ENCODE measurements at regions of chr5 and their contacts with region 1.

Region 1: GRCh38 chr5:174045470-174046025 is at the start of gene NSG2:
- DNase-seq: peak; percentile 72 to 91
- ATAC-seq: peak; percentile 99 to 100
- H3K4me3 ChIP-seq: no peak within 1 kb of the TSS
- H3K27ac ChIP-seq: no peak within 1 kb of the TSS
- H3K4me1 ChIP-seq: no peaks in the 10 kb centered on the region
- CTCF ChIP-seq: peak; percentile 81
- EP300 ChIP-seq: no peak
- POLR2A ChIP-seq: no peak
- RAD21 ChIP-seq: peak; percentile 92
- polyA plus RNA-seq, gene NSG2: 0.05 and 0.06 TPM in 2 replicates

Region 2: GRCh38 chr5:173887610-173888472 is 157.7 kb before region 1 on chr5 and contains the start of gene CPEB4:
- CTCF ChIA-PET with region 1: no interaction called
- POLR2A ChIA-PET with region 1: no interaction called
- DNase-seq: peak; percentile 99
- ATAC-seq: peak; percentile 97 to 98
- H3K4me3 ChIP-seq: peak within 1 kb of the TSS; percentile 83
- H3K27ac ChIP-seq: peak within 1 kb of the TSS; percentile 93 to 98
- H3K4me1 ChIP-seq: peaks cover 20% of the 10 kb centered on the region
- CTCF ChIP-seq: no peak
- EP300 ChIP-seq: no peak
- POLR2A ChIP-seq: peak; percentile 69
- RAD21 ChIP-seq: no peak; a peak in 1 of 5 replicates
- polyA plus RNA-seq, gene CPEB4: 49.1 and 50.0 TPM in 2 replicates

Region 3: GRCh38 chr5:174030289-174030688 is 15.3 kb before region 1 on chr5:
- CTCF ChIA-PET with region 1: interaction called, 17 read pairs
- POLR2A ChIA-PET with region 1: no interaction called
- DNase-seq: no peak
- ATAC-seq: no peak
- H3K4me3 ChIP-seq: no peak overlapping the region
- H3K27ac ChIP-seq: no peak overlapping the region
- H3K4me1 ChIP-seq: no peaks in the 10 kb centered on the region
- CTCF ChIP-seq: no peak
- EP300 ChIP-seq: no peak
- POLR2A ChIP-seq: no peak
- RAD21 ChIP-seq: no peak

Region 4: DNA sequence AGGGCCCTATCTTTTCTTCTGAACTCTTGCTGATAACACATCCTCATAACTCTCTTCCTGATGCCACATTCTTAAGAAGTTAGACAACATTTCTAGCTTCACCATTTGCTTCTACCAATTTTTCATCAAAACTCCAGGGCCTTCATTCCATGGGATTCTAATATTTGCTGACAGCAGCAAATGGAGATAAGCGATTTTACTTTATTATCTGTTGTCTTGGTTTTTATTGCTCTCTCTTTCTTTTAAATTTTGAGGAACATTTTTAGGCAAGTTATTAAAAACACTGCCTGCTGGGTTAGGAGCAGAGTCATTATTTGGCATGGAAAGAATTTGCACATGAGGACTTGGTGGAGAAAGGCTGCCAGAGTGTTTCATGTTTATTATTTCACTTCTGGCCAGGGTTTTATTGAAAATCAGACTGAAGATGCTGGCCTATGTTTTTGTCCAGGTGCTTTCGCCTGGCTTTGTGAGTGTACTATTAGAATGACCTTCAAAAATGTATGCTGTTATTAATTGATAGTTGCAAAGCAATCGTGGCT is 27.6 kb after region 1 on chr5:
- CTCF ChIA-PET with region 1: interaction called, 10 read pairs
- POLR2A ChIA-PET with region 1: no interaction called
- DNase-seq: no peak
- ATAC-seq: no peak
- H3K4me3 ChIP-seq: no peak overlapping the region
- H3K27ac ChIP-seq: no peak overlapping the region
- H3K4me1 ChIP-seq: no peaks in the 10 kb centered on the region
- CTCF ChIP-seq: no peak
- EP300 ChIP-seq: no peak
- POLR2A ChIP-seq: no peak
- RAD21 ChIP-seq: no peak